ENCODE measurements at regions of chr9 and their contacts with region 1.

Region 1: DNA sequence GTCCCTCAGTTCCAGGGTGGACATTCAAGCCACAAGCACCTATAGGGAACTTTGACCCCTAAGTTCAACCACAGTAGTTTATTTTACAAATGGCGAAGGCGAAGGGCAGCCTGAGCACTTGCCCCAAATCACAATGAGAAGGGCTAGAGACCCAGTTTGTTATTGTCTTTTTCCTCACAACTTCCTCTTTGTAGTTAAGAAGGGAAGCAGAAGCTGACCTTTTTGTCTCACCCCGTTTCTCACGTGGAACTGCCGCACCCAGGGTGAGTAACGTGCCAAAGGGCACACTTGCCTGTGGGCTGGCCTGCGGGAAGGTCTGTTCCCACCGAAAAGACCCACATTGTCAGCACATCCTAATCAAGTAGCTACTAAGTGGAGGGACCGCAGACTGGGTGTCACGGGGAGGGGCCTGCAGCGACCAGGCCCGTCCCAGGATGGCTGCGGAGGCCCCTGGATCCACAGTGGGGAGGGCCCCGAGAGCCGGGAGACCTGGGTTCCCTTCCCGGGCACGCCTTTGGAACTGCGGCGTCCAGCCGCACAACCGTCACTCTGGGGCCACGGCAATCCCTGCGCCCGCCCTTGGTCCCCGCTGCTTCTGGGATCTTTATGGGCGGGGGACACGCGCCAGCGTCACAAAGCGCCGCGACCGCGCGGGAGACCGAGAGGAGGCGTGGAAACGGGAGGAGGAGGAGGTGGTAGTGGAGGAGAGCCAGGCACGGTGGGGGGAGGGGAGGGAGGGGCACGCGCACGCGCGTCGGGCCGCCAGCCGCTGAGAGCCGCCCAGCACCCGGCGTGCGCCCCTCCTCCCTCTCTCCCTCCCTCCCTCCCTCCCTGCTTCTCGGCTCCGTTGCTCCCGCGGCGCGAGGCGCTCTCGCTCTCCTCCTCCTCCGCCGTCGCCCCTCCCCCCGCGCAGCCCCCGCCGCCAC is at the start of gene UBE2R2:
- DNase-seq: peak; percentile 98
- CTCF ChIP-seq: no peak

Region 2: DNA sequence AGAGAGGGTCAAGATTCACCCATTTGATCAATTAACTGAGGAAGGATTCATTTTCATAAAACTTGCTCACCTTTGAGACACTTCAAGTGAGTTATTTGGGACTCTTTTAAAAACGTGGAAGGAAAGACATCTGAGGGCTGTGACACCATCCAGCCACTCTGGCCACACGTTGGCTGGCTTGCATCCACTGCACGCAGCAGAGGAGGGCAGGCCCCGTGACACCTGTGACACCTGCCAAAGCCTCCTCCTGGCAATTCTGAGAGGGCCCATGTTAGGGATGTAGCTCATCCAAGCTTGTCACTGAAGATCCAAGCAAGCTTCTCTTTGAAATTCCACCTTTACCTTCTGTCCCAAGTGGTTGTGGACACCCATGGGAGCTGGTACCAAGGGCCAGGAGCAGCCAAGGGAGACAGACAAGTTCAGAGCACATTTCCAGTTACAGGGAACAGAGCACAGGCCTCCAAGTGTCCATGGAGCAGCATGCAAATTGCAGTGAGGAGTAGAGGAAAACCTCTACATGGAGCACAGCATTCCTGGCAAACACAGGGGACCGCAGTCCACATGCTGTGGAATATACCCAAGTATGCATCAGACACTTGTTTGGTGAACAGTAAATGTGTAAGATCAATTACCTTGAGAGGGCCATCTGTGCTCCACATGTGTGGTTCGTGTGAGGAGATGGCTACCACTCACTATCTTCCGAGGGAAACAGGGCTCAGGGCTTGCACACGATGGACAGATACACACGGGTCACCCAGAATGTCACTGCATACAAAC is 16.5 kb before region 1 on chr9:
- CTCF ChIA-PET with region 1: interaction called, 10 read pairs
- POLR2A ChIA-PET with region 1: no interaction called
- DNase-seq: no peak
- CTCF ChIP-seq: no peak

Region 3: DNA sequence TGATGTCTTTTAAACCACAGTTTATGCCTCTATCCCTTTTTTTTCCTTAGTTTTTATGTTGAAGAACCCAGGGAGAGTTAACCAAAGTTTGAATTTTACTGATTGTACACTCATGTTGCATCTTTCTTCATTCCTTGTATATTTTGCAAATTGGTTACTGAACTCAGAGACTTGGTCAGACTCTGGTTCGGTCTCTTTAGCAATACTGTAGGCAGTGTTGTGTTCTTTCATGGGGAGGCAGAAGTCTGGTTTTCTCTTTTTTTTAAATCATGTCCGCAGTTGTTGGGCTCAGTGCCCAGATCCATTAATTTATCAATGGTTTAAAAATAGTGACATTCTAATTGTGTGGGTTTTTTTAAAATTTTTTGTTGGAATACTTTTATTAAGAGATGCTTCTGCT is 23.8 kb after region 1 on chr9:
- CTCF ChIA-PET with region 1: interaction called, 38 read pairs
- POLR2A ChIA-PET with region 1: interaction called, 3 read pairs
- DNase-seq: no peak
- CTCF ChIP-seq: no peak

Region 4: DNA sequence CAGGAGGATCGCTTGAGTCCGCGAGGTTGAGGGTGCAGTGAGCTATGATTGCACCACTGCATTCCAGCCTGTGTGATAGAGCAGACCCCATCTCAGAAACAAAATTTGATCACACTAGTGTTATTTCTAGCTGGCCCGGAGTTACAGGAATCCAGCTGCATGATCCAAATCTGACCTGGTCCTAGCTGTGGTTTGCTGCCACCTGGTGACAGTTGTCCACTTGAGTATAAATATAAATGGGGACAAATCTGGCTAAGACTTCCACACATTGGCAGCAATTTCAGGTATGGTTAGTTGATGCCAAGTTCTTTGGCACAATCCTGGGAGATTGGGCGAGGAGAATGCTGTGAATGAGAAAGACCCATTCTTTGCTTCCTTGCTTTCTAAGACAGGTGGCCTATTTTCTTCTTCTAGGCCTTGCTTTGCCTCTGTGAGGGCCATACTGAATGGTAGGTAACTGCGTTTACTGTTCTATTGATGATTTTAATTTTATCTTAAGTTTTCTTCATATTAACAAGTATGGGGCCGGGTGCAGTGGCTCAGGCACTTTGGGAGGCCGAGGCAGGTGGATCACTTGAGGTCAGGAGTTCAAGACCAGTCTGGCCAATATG is 35.7 kb after region 1 on chr9:
- CTCF ChIA-PET with region 1: interaction called, 59 read pairs
- POLR2A ChIA-PET with region 1: no interaction called
- DNase-seq: peak; percentile 37
- CTCF ChIP-seq: peak; percentile 61

Region 5: DNA sequence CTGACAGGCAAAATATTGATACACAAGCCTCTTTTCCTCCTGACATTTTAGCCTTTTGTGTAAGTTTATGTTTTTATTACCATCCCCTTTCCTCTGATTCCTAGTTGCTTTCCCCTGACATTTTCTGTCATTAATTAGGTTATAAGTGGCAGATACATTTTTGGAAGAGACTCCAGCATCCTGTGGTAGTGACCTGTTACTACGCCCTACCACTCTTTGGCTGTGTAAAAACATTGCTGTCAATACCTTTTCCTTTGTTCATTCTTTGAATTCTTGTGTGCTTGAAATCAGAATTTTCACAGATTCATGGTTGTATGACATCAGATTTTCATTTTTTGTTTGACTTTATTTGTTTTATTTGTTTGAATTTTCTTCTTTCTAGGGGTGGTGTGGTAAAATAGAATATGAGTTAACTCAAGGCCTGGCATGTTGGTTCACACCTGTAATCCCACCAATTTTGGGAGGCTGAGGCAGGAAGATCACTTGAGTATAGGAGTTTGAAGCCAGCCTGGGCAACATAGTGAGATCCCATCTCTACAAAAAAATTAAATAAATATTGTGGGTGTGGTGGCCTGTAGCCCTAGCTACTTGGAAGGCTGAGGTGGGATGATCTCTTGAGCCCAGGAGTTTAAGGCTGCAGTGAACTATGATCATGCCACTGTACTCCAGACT is 43.7 kb after region 1 on chr9:
- CTCF ChIA-PET with region 1: interaction called, 59 read pairs
- POLR2A ChIA-PET with region 1: no interaction called
- DNase-seq: no peak
- CTCF ChIP-seq: no peak

Region 6: GRCh38 chr9:34072868-34073590 is 256.4 kb after region 1 on chr9:
- CTCF ChIA-PET with region 1: interaction called, 28 read pairs
- POLR2A ChIA-PET with region 1: no interaction called
- DNase-seq: no peak
- CTCF ChIP-seq: no peak

Measured in GM10248 (cell line).